GM12878 (cell line): ENCODE measurements at regions of chr7 and their contacts with region 1.

Region 1: GRCh38 chr7:131493581-131493980 is 62.8 kb downstream of the PODXL start:
- DNase-seq: no peak
- ATAC-seq: no peak
- H3K4me3 ChIP-seq: no peak overlapping the region
- H3K27ac ChIP-seq: no peak overlapping the region
- H3K4me1 ChIP-seq: no peaks in the 10 kb centered on the region
- H3K27me3 ChIP-seq: no peaks in the 10 kb centered on the region
- CTCF ChIP-seq: no peak
- EP300 ChIP-seq: no peak
- POLR2A ChIP-seq: no peak
- RAD21 ChIP-seq: no peak

Region 2: GRCh38 chr7:131370523-131370968 is 123.0 kb before region 1 on chr7:
- CTCF ChIA-PET with region 1: no interaction called
- POLR2A ChIA-PET with region 1: no interaction called
- RAD21 ChIA-PET with region 1: no interaction called
- SMC1A ChIA-PET with region 1: no interaction called
- in situ Hi-C with region 1: no loop called
- intact Hi-C with region 1: no loop called
- DNase-seq: peak; percentile 48
- ATAC-seq: peak; percentile 94
- H3K4me3 ChIP-seq: no peak overlapping the region
- H3K27ac ChIP-seq: no peak overlapping the region
- H3K4me1 ChIP-seq: peaks cover 10% of the 10 kb centered on the region; the same call in 1 of the 2 replicates
- H3K27me3 ChIP-seq: no peaks in the 10 kb centered on the region
- CTCF ChIP-seq: no peak
- EP300 ChIP-seq: 0 out of 4 replicates have a peak, but pooled peaks of 1 of the 2 experiments have one; percentile 16
- POLR2A ChIP-seq: no peak
- RAD21 ChIP-seq: no peak

Region 3: GRCh38 chr7:131482800-131483199 is 10.8 kb before region 1 on chr7:
- CTCF ChIA-PET with region 1: interaction called, 12 read pairs
- POLR2A ChIA-PET with region 1: interaction called, 3 read pairs
- RAD21 ChIA-PET with region 1: no interaction called
- SMC1A ChIA-PET with region 1: interaction called, 18 read pairs
- in situ Hi-C with region 1: no loop called
- intact Hi-C with region 1: no loop called
- DNase-seq: peak; percentile 15
- ATAC-seq: peak; percentile 88
- H3K4me3 ChIP-seq: no peak overlapping the region
- H3K27ac ChIP-seq: peak overlapping the region; percentile 58
- H3K4me1 ChIP-seq: peaks cover 18% of the 10 kb centered on the region
- H3K27me3 ChIP-seq: no peaks in the 10 kb centered on the region
- CTCF ChIP-seq: no peak
- EP300 ChIP-seq: no peak
- POLR2A ChIP-seq: no peak
- RAD21 ChIP-seq: no peak

Region 4: DNA sequence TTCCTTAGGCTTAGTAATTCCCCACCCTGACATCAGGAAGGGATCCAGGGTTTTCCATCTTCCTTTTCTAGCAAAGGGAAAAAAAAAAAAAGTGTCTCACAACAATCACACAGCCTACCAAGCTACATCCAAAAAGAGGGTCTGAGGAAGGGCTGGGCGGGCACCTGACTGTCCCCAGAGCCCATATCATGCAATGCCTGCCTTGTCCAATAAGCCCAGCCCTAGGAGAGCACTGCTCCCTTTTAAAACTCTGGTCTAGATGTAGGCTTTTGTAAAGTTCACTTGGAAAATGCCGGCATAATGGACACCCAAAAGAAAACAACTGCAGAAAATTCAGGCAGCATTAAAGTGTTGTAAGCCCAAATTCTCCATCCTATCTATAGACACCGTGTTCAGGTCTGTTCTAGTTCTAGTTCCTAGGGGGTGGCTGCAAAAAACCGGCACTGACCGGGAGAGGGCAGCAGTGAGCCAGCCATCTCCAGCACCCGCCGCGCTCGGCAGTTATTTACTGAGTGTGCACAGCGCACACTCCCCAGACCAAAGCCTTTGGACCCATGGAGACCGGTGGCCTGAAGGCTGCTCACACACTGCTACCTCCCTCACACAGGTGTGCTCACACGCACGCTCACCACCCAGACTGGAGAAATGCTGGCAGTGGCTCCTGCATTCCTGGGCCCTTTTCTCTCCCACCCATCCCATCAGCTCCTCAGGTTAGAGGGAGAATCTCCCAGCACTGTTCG is 14.2 kb after region 1 on chr7:
- CTCF ChIA-PET with region 1: interaction called, 16 read pairs
- POLR2A ChIA-PET with region 1: interaction called, 5 read pairs
- RAD21 ChIA-PET with region 1: no interaction called
- SMC1A ChIA-PET with region 1: interaction called, 8 read pairs
- in situ Hi-C with region 1: no loop called
- intact Hi-C with region 1: no loop called
- DNase-seq: no peak
- ATAC-seq: peak; percentile 96
- H3K4me3 ChIP-seq: no peak overlapping the region
- H3K27ac ChIP-seq: no peak overlapping the region
- H3K4me1 ChIP-seq: no peaks in the 10 kb centered on the region
- H3K27me3 ChIP-seq: no peaks in the 10 kb centered on the region
- CTCF ChIP-seq: peak; percentile 91 to 95 (median 95)
- EP300 ChIP-seq: no peak
- POLR2A ChIP-seq: no peak
- RAD21 ChIP-seq: peak; percentile 66